Stomach (tissue), 19 donors: ENCODE measurements at regions of chr7 and their contacts with region 1.

Region 1: GRCh38 chr7:137898839-137899721 is 52.3 kb upstream of the DGKI start:
- DNase-seq: peak; percentile 83 to 93
- H3K4me3 ChIP-seq: peak overlapping the region in 1 of 4 donors; percentile 19
- H3K27ac ChIP-seq: peak overlapping the region in 3 of 5 donors; percentile 15 to 61 (median 36)
- H3K4me1 ChIP-seq: peaks cover 7 to 29% (median 23%) of the 10 kb centered on the region in 4 donors
- H3K27me3 ChIP-seq: no peaks in the 10 kb centered on the region
- CTCF ChIP-seq: peak in 5 of 7 experiments; percentile 73 to 88 (median 84)
- EP300 ChIP-seq: no peak
- POLR2A ChIP-seq: no peak

Region 2: DNA sequence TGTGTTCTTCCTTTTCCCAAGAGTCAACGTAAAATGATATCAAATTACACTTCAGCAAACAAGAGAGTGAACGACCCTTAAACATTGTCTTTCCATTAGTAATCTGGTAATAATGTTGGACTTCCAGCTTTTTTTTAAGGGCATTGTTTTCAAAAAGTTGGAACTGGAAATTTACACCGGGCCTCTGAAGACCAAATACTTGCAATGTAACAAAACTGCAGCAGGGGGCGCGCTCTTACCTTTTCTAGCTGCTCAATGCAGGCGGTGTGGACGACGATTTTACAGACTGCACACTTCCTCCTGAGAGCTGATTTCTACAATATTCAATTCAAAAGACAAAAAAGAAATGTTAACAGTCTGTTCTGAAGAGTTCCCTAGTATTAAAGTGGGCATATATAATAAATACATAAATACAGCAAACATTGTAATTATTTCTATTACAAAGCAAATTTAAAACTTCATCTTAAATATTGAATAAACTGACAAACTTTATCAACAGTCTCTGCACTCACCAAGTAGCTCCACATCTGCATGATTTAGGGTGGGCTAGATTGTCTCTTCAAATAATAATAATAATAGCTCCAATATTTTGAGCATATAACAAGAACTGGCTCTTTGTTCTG is 242.7 kb before region 1 on chr7:
- intact Hi-C with region 1: loop called (anchors 10 kb)
- DNase-seq: peak; percentile 81 to 91
- H3K4me3 ChIP-seq: no peak overlapping the region
- H3K27ac ChIP-seq: no peak overlapping the region
- H3K4me1 ChIP-seq: peaks cover 0 to 10% (median 0%) of the 10 kb centered on the region in 4 donors
- H3K27me3 ChIP-seq: peaks cover 0 to 6% (median 0%) of the 10 kb centered on the region in 3 donors
- CTCF ChIP-seq: peak in 5 of 7 experiments; percentile 47 to 78 (median 69)
- EP300 ChIP-seq: no peak
- POLR2A ChIP-seq: no peak

Region 3: DNA sequence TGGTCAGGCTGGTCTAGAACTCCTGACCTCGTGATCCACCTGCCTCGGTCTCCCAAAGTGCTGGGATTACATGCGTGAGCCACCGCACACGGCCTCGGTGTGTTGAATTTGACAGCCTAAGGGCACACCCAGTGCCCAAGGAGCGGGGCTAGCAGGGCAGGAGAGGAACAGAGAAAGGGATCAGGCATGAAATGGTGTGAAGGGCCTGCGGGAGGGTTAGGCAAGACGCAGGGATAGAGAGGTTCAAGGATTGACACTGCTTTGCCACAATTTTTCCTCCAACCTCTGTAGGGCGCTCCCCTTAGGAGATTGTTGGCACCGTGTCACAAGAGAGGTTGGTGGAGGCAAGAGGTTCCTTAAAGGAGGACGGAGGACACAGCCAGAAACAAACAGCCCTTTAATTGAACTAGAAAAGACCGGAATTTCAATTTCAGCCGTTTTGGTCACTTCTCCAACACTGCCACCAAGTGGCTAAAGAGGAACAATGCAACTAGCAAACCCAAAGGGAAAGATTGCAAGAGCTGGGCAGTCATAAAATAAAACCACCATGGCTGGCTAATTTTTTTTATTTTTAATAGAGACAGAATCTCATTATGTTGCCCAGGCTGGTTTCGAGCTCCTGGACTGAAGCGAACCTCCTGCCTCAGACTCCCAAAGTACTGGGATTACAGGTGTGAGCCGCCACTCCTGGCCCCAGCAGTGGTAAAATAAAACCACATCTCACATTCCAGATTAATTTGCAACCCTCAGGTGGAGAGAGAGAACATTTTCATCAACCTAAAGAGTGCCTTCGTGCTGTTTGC is 109.7 kb after region 1 on chr7:
- intact Hi-C with region 1: loop called (anchors 2 kb)
- DNase-seq: peak in 1 of 2 donors; percentile 86
- H3K4me3 ChIP-seq: no peak overlapping the region
- H3K27ac ChIP-seq: no peak overlapping the region
- H3K4me1 ChIP-seq: peaks cover 0 to 10% (median 4%) of the 10 kb centered on the region in 4 donors
- H3K27me3 ChIP-seq: no peaks in the 10 kb centered on the region
- CTCF ChIP-seq: peak in 5 of 7 experiments; percentile 75 to 94 (median 89)
- EP300 ChIP-seq: no peak
- POLR2A ChIP-seq: no peak

Region 4: GRCh38 chr7:138125598-138126111 is 226.6 kb after region 1 on chr7:
- intact Hi-C with region 1: no loop called
- DNase-seq: peak in 1 of 2 donors; percentile 27
- H3K4me3 ChIP-seq: no peak overlapping the region
- H3K27ac ChIP-seq: no peak overlapping the region
- H3K4me1 ChIP-seq: no peaks in the 10 kb centered on the region
- H3K27me3 ChIP-seq: no peaks in the 10 kb centered on the region
- CTCF ChIP-seq: no peak
- EP300 ChIP-seq: no peak
- POLR2A ChIP-seq: no peak